Gastrocnemius medialis (tissue), 4 donors: ENCODE measurements at regions of chr1 and their contacts with region 1.

Region 1: GRCh38 chr1:92310185-92310597 is 11.3 kb downstream of the RPAP2 start:
- DNase-seq: no peak
- ATAC-seq: no peak
- H3K4me3 ChIP-seq: no peak overlapping the region
- H3K27ac ChIP-seq: no peak overlapping the region
- H3K4me1 ChIP-seq: no peaks in the 10 kb centered on the region
- H3K27me3 ChIP-seq: no peaks in the 10 kb centered on the region
- CTCF ChIP-seq: peak in 3 of 5 experiments; percentile 36 to 44 (median 39)
- POLR2A ChIP-seq: no peak

Region 2: DNA sequence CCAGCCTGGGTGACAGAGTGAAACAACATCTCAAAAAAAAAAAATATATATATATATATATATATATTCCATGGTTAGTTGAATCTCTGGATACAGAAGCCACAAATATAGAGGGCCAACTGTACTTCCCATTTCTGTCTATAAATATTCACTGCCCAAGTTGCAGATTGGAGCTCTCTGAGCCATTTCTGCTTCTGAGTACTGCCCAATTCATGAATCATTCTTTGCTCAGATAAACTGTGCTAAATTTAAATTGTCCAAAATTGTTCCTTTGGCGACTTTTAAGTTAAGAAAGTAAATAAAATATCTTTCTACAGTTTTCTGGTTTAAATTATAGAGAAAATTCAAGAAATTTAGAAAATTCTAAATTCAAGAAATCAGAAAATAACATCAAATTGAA is 115.7 kb before region 1 on chr1:
- in situ Hi-C with region 1: no loop called
- intact Hi-C with region 1: no loop called
- DNase-seq: no peak
- ATAC-seq: no peak
- H3K4me3 ChIP-seq: no peak overlapping the region
- H3K27ac ChIP-seq: no peak overlapping the region
- H3K4me1 ChIP-seq: no peaks in the 10 kb centered on the region
- H3K27me3 ChIP-seq: no peaks in the 10 kb centered on the region
- CTCF ChIP-seq: no peak
- POLR2A ChIP-seq: no peak

Region 3: DNA sequence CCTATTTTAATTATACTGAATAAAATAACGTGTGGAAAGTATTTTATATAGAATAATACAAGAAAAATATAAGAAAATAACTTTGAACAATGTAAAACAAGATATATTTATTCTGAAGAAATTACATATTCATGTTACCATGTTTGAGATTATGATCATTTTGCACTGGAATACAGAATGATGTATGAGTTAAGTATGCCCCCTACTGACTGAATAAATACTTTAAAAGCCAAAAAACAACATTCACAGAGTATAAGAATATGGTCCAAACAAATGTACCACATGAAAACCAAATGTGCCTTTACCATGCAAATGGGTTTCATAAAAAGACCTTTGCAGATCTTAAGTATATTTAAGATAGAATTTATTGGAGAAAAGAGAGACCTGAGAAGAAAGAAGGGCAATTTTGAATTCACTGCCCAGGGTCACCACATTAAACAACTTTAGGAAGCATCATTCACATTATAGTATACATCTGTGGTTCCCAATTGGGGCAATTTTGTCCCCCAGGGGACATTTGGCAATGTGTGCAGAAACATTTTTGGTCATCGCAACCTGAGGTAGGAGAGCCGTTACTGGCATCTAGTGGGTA is 313.1 kb after region 1 on chr1:
- in situ Hi-C with region 1: loop called in 3 of 4 experiments (anchors 25 kb)
- intact Hi-C with region 1: no loop called
- DNase-seq: no peak
- ATAC-seq: no peak
- H3K4me3 ChIP-seq: no peak overlapping the region
- H3K27ac ChIP-seq: no peak overlapping the region
- H3K4me1 ChIP-seq: peaks cover 0 to 4% of the 10 kb centered on the region in 2 donors
- H3K27me3 ChIP-seq: no peaks in the 10 kb centered on the region
- CTCF ChIP-seq: peak in 2 of 5 experiments; percentile 18 to 29
- POLR2A ChIP-seq: no peak

Region 4: GRCh38 chr1:92817986-92818764 is 508.0 kb after region 1 on chr1:
- in situ Hi-C with region 1: loop called in 1 of 4 experiments (anchors 25 kb)
- intact Hi-C with region 1: no loop called
- DNase-seq: no peak
- ATAC-seq: no peak
- H3K4me3 ChIP-seq: no peak overlapping the region
- H3K27ac ChIP-seq: no peak overlapping the region
- H3K4me1 ChIP-seq: no peaks in the 10 kb centered on the region
- H3K27me3 ChIP-seq: no peaks in the 10 kb centered on the region
- CTCF ChIP-seq: peak; percentile 22 to 66 (median 54)
- POLR2A ChIP-seq: no peak